A549 (cell line): ENCODE measurements at regions of chr22 and their contacts with region 1.

Region 1: GRCh38 chr22:20268279-20269012 is at the start of gene RTN4R:
- DNase-seq: peak; percentile 7 to 44
- ATAC-seq: peak; percentile 72 to 86
- H3K4me3 ChIP-seq: peak within 1 kb of the TSS; percentile 49
- H3K27ac ChIP-seq: peak within 1 kb of the TSS; percentile 66 to 83
- H3K4me1 ChIP-seq: peaks cover 12% of the 10 kb centered on the region
- CTCF ChIP-seq: peak; percentile 28; the same call in 2 of the 3 replicates
- EP300 ChIP-seq: no peak
- POLR2A ChIP-seq: no peak
- RAD21 ChIP-seq: peak; percentile 33 to 37; a peak in 2 of 5 replicates
- polyA plus RNA-seq, gene RTN4R: 1.0 and 1.2 TPM in 2 replicates

Region 2: DNA sequence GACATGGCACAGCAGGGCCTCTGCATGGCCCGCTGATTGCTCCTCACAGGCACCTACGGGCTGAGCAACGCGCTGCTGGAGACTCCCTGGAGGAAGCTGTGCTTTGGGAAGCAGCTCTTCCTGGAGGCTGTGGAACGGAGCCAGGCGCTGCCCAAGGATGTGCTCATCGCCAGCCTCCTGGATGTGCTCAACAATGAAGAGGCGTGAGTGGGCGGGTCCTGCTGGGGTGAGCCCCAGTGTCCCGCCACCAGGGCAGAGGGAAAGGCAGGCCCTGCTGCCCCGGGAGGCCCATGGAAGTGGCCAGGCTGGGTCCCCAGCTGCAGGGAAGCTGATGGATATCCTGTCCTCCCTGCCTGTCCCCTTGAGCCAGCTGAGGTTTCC is 207.0 kb before region 1 on chr22:
- CTCF ChIA-PET with region 1: no interaction called
- POLR2A ChIA-PET with region 1: no interaction called
- DNase-seq: no peak
- ATAC-seq: no peak
- H3K4me3 ChIP-seq: no peak overlapping the region
- H3K27ac ChIP-seq: no peak overlapping the region
- H3K4me1 ChIP-seq: no peaks in the 10 kb centered on the region
- CTCF ChIP-seq: no peak
- EP300 ChIP-seq: no peak
- POLR2A ChIP-seq: no peak
- RAD21 ChIP-seq: no peak

Region 3: DNA sequence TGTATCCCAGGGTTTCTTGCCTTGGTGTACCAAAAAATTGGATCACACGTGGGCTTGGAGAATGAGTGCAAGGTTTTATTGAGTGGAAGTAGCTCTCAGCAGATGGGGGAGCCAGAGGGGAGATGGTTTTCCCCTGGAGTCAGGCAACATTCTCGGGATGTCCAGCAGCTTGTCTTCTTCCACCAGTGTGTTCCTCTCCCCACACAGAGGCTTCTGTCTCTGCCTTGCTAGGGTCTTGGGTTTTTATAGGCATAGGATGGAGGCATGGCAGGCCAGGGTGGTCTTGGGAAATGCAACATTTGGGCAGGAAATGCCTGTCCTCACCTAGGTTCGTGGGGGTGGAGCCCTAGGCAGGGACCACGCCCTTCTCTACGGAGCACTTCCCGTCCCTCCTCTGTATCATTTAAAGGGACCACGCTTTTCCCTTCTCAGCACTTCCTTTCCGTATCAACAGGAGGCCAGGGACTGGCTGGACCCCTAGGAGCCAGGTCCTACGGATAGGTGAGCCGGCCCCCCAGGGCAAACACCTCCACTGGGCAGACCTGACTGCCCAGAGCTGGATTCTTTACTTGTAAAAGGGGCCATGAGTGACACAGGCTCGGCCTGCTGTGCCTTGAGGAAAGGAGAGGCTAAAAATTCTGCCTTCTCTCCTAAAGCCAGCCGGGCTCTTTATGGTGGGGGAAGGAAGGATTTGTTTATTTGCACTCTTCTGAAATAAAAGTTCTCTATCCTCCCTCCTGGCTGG is 62.3 kb before region 1 on chr22:
- CTCF ChIA-PET with region 1: no interaction called
- POLR2A ChIA-PET with region 1: no interaction called
- DNase-seq: peak; percentile 59 to 75
- ATAC-seq: peak; percentile 87 to 95
- H3K4me3 ChIP-seq: peak overlapping the region; percentile 64
- H3K27ac ChIP-seq: peak overlapping the region; percentile 84 to 95
- H3K4me1 ChIP-seq: peaks cover 27% of the 10 kb centered on the region
- CTCF ChIP-seq: no peak
- EP300 ChIP-seq: no peak
- POLR2A ChIP-seq: peak; percentile 33; the same call in 1 of the 2 replicates
- RAD21 ChIP-seq: no peak

Region 4: DNA sequence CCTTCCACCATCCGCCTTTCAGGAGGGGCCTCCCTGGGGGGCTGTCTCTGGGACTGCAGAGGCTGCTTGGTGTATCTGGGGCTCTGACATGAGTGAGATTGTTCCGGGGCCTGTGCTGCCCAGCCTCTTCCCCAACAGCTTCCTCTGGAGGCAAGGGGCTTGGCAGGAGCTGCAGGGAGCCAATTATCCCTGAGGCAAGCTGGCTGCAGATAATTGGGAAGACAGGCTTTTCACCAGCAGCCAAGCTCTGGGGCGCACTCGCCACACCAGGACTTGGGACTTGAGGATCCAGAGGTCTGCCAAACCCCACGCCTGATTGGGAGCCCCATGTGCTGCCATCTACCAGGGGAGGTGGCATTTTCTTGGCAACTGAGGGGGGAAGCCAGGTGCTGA is 15.2 kb after region 1 on chr22:
- CTCF ChIA-PET with region 1: interaction called, 19 read pairs
- POLR2A ChIA-PET with region 1: no interaction called
- DNase-seq: no peak
- ATAC-seq: no peak
- H3K4me3 ChIP-seq: no peak overlapping the region
- H3K27ac ChIP-seq: no peak overlapping the region
- H3K4me1 ChIP-seq: no peaks in the 10 kb centered on the region
- CTCF ChIP-seq: no peak
- EP300 ChIP-seq: no peak
- POLR2A ChIP-seq: no peak
- RAD21 ChIP-seq: no peak